ENCODE measurements at regions of chr4 and their contacts with region 1.

Region 1: DNA sequence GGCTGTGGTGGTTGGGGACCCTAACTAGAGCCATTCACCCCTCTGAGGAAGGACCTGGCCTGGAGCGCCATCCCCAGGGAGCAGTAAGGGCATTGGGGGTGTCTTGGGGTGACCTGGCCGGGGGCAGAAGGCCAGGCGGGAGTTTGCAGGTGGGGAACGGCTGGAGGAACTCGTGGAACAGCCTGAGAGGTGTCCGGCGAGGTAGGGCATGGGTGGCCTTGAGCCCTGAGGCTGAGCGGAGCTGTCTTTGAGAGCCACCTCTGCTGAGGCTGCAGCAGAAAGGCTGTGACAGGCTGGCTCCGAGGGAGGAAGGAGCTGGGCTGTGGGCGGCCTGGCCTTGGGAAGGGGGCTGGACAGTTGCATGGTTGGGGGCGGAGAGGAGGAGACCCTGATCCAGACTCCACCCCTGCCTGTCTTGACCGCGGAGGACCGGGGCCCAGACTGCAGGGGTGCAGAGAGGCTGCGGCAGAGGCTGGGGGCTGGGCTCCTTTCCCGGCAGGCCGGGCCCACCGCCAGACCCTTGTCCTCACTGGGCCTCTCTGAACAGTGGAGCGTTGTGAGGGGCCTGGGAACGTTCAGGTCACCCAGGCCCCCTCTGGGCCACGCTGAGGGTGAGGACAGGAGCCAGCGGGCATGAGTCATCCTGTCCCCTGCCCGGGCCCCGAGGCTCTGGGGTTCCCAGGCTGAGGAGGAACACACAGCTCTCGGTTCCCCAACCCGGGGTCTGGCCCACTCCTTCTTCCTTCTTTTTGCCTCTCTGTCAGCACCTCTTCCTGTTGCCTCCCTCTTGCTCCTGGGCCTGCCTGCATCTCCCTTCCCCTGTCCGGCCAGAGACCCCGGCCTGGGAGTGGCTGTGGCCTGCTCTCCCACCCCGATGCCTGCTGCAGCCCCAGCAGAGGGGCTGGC is 8.1 kb downstream of the SH3BP2 start:
- DNase-seq: peak; percentile 92
- ATAC-seq: peak; percentile 89
- H3K4me3 ChIP-seq: peak overlapping the region; percentile 56 to 79 (median 66)
- H3K27ac ChIP-seq: peak overlapping the region; percentile 83
- H3K4me1 ChIP-seq: peaks cover 61% of the 10 kb centered on the region
- H3K27me3 ChIP-seq: no peaks in the 10 kb centered on the region
- CTCF ChIP-seq: no peak
- EP300 ChIP-seq: peak; percentile 45 to 69; a peak in 3 of 4 replicates
- POLR2A ChIP-seq: peak in 1 of 2 experiments; percentile 67; a peak in 2 of 4 replicates
- RAD21 ChIP-seq: 0 out of 2 replicates have a peak, but pooled peaks have one; percentile 26

Region 2: GRCh38 chr4:2755837-2756694 is 44.9 kb before region 1 on chr4 and contains the start of gene TNIP2:
- CTCF ChIA-PET with region 1: no interaction called
- POLR2A ChIA-PET with region 1: interaction called, 30 read pairs
- in situ Hi-C with region 1: no loop called
- intact Hi-C with region 1: loop called (anchors 2 kb)
- DNase-seq: peak; percentile 64
- ATAC-seq: peak; percentile 87
- H3K4me3 ChIP-seq: peak within 1 kb of the TSS; percentile 64 to 88 (median 82)
- H3K27ac ChIP-seq: peak within 1 kb of the TSS; percentile 76
- H3K4me1 ChIP-seq: peaks cover 61% of the 10 kb centered on the region
- H3K27me3 ChIP-seq: no peaks in the 10 kb centered on the region
- CTCF ChIP-seq: peak; percentile 50; the same call in 1 of the 2 replicates
- EP300 ChIP-seq: no peak
- POLR2A ChIP-seq: peak; percentile 71 to 75; a peak in 3 of 4 replicates
- RAD21 ChIP-seq: peak; percentile 95
- total RNA-seq, gene TNIP2: 28.5 and 38.0 TPM in 2 replicates

Region 3: GRCh38 chr4:2761035-2761923 is 39.7 kb before region 1 on chr4:
- CTCF ChIA-PET with region 1: no interaction called
- POLR2A ChIA-PET with region 1: interaction called, 30 read pairs
- in situ Hi-C with region 1: no loop called
- intact Hi-C with region 1: loop called (anchors 2 kb)
- DNase-seq: peak; percentile 86
- ATAC-seq: peak; percentile 87
- H3K4me3 ChIP-seq: peak overlapping the region; percentile 44 to 73 (median 63)
- H3K27ac ChIP-seq: peak overlapping the region; percentile 80
- H3K4me1 ChIP-seq: peaks cover 45% of the 10 kb centered on the region
- H3K27me3 ChIP-seq: no peaks in the 10 kb centered on the region
- CTCF ChIP-seq: peak; percentile 58
- EP300 ChIP-seq: peak in 1 of 2 experiments; percentile 36; a peak in 1 of 4 replicates
- POLR2A ChIP-seq: peak; percentile 36 to 54; a peak in 3 of 4 replicates
- RAD21 ChIP-seq: peak; percentile 28; the same call in 1 of the 2 replicates

Region 4: DNA sequence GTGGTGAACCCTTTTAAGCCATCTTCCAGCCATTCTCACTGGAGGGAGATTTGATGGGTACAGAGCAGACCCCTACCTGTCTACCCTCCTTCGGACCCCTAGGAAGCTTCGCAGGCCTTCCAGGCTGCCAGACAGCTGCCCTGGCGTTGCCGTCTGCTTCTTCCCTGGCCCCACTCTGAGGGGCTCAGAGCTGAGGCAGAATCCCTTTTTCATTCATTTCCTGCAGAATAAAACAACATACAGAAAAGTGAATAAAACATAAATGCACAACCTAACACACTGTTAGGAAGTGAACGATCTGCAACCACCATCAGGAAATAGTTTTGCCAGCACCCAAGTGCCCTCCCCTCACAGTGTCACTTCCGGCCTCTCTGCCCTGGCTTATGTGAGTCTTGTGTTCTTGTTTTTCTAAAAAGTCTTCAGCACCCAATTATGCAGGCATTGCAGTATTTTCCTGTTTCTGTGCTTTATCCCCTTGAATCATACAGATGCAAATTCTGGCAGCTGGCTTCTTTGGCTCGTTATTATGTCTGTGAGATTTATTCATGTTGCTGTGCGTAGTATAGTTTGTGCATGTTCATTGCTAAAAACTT is 37.1 kb after region 1 on chr4:
- CTCF ChIA-PET with region 1: no interaction called
- POLR2A ChIA-PET with region 1: no interaction called
- in situ Hi-C with region 1: loop called (anchors 5 kb)
- intact Hi-C with region 1: no loop called
- DNase-seq: no peak
- ATAC-seq: no peak
- H3K4me3 ChIP-seq: no peak overlapping the region
- H3K27ac ChIP-seq: no peak overlapping the region
- H3K4me1 ChIP-seq: peaks cover 23% of the 10 kb centered on the region
- H3K27me3 ChIP-seq: no peaks in the 10 kb centered on the region
- CTCF ChIP-seq: no peak
- EP300 ChIP-seq: no peak
- POLR2A ChIP-seq: no peak
- RAD21 ChIP-seq: no peak

Region 5: DNA sequence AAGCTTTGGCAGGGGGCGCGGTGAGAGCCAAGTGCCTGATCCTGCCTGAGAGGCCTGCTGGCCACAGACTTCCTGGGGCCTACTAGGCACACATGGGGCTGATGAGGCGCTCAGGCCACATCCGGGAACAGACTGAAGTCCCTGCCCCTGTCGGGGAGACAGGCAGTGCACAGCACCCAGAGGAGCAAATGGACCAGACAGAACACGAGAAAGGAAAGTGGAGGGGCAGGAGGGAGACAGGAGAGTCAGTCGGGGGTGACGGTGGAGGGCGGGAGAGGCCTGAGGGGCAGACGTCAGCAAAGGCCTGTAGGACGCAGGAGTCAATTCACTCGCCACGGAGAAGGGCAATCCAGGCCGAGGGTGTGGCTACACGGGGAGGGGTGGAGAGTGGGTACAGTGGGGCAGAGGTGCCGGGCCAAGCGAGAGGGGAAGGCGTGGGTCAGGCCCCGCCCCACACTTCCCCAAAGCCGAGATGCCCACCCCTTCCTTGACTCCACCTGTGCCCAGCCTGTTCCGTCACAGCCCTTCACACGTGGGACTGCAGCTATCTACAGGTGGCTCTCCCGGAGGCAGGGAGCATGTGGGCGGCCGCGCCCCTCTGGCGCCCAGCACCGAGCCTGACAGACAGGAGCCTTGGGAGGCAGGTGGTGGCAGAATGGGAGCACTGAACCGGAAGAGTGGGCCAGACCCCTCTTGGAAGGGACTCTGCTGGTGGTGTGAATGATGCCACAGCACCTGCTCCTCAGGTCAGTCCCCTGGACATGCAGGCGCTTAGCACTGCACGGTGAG is 141.8 kb after region 1 on chr4:
- CTCF ChIA-PET with region 1: no interaction called
- POLR2A ChIA-PET with region 1: no interaction called
- in situ Hi-C with region 1: no loop called
- intact Hi-C with region 1: no loop called
- DNase-seq: no peak
- ATAC-seq: peak; percentile 4; the same call in 1 of the 3 replicates
- H3K4me3 ChIP-seq: no peak overlapping the region
- H3K27ac ChIP-seq: no peak overlapping the region
- H3K4me1 ChIP-seq: peaks cover 2% of the 10 kb centered on the region
- H3K27me3 ChIP-seq: no peaks in the 10 kb centered on the region
- CTCF ChIP-seq: no peak
- EP300 ChIP-seq: no peak
- POLR2A ChIP-seq: no peak
- RAD21 ChIP-seq: no peak

Measured in HepG2 (cell line).